ENCODE measurements at regions of chr6 and their contacts with region 1.

Region 1: DNA sequence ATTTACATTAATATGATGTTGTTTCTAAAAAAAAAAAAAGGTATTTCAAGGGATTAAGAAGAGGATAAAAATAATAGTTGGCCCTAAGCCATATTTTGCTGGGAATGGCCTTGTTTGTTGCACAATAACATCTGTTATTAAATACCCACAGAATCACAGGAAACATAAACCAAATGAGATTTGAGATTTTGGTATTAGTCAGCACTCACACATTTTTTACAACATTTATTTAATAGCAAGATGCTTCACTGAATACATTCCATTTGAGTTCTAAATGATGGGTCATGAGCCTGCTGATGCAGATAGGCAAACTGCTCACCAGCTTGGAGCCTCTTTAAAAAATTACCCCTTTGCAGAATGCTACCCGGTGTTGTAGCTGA is 92.9 kb upstream of the ENPP5 start:
- DNase-seq: peak; percentile 61
- H3K4me3 ChIP-seq: no peak overlapping the region
- H3K27ac ChIP-seq: no peak overlapping the region
- H3K4me1 ChIP-seq: peaks cover 3% of the 10 kb centered on the region
- H3K27me3 ChIP-seq: peaks cover 0 to 3% of the 10 kb centered on the region in 2 experiments
- CTCF ChIP-seq: no peak
- POLR2A ChIP-seq: no peak

Region 2: GRCh38 chr6:46233131-46233530 is 30.6 kb before region 1 on chr6:
- CTCF ChIA-PET with region 1: no interaction called
- POLR2A ChIA-PET with region 1: no interaction called
- dilution Hi-C with region 1: no loop called
- intact Hi-C with region 1: no loop called
- DNase-seq: no peak
- H3K4me3 ChIP-seq: no peak overlapping the region
- H3K27ac ChIP-seq: no peak overlapping the region
- H3K4me1 ChIP-seq: no peaks in the 10 kb centered on the region
- H3K27me3 ChIP-seq: no peaks in the 10 kb centered on the region
- CTCF ChIP-seq: no peak
- POLR2A ChIP-seq: no peak

Region 3: DNA sequence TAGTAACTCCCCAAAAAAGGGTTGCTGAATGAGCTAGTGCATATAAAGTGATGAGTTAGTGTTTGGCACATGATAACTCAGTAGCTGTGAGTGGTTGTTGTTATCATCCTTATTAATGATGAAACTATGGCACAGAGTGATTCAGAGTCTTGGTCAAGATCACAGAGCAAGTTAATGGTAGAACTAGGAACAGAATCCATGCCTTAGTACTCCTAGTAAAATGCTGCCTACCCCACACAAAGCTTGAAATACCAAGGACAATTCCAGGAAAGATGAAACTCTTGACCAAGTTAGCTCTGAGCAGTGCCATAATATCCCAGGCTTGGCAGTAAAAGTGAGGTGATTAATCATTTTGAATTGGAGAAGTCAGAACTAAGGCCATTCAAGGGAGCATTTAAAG is 16.2 kb after region 1 on chr6:
- CTCF ChIA-PET with region 1: no interaction called
- POLR2A ChIA-PET with region 1: no interaction called
- dilution Hi-C with region 1: no loop called
- intact Hi-C with region 1: no loop called
- DNase-seq: no peak
- H3K4me3 ChIP-seq: no peak overlapping the region
- H3K27ac ChIP-seq: no peak overlapping the region
- H3K4me1 ChIP-seq: no peaks in the 10 kb centered on the region
- H3K27me3 ChIP-seq: peaks cover 8 to 11% of the 10 kb centered on the region in 2 experiments
- CTCF ChIP-seq: no peak
- POLR2A ChIP-seq: no peak

Region 4: DNA sequence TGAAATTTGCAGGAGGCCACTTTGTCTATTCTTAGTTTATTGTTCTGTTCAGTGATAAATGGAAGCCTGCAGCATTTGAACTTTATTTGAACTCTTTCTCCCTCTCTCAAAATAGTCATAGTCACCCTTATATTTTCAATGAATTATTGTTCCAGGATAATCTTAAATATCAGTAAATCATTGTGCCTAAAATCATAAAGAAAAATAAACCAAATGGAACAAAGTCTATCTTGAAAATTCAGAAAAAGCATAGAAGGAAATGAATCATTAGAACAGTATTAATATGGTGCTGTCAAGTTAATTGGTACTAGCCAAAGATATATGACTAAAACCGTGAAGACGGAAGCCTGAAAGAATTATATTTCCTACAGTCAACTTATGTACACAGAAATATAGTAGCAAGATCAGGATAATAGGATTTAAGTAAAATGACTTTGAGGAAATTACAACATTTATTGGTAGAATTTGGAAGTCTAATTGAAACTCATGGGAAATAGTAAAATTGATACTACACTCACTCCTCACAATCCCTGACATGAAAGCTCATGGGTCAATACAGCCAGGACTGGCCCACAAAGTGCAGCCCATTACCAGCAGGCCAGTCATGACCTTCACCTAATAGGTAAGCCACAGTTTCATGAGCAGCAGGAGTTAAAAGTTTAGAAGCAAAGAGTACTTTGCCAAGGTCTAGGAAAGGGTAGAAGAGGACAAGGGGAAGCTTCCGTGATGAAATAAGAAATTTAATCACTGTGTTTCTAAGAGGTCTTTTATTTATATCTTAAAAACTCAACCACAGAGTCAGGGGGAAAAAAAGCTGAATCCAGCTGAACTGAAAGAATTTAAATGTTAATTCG is 27.0 kb after region 1 on chr6:
- CTCF ChIA-PET with region 1: interaction called, 3 read pairs
- POLR2A ChIA-PET with region 1: no interaction called
- dilution Hi-C with region 1: no loop called
- intact Hi-C with region 1: loop called (anchors 1 kb)
- DNase-seq: peak; percentile 88
- H3K4me3 ChIP-seq: no peak overlapping the region
- H3K27ac ChIP-seq: peak overlapping the region; percentile 80
- H3K4me1 ChIP-seq: peaks cover 31% of the 10 kb centered on the region
- H3K27me3 ChIP-seq: peaks cover 5 to 14% of the 10 kb centered on the region in 2 experiments
- CTCF ChIP-seq: no peak
- POLR2A ChIP-seq: no peak